Pancreas (tissue), 10 donors: ENCODE measurements at regions of chr22 and their contacts with region 1.

Region 1: DNA sequence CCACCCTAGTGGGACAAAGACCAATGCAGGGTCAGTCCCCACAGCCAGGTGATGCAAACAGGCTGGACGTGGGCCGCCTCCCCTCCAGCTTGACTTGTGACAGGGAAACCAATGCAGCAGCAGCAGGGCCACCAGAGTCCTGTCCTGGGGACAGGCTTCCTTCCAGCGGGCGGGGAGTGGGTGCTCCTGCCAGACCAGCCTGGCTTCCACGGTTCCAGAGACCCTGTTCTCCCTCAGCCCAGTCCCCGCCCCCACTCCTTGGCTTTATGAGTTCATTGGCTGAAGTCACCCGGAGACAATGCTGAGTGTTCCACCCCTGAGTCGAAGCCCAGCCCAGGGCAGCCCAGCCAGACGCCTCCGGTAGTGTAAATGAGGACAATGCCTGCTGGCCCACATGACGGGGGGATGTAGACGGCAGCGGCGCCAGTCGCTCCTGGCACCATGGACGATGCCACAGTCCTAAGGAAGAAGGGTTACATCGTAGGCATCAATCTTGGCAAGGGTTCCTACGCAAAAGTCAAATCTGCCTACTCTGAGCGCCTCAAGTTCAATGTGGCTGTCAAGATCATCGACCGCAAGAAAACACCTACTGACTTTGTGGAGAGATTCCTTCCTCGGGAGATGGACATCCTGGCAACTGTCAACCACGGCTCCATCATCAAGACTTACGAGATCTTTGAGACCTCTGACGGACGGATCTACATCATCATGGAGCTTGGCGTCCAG is at the start of gene TSSK2:
- DNase-seq: peak in 2 of 6 donors; percentile 28 to 43
- ATAC-seq: no peak
- H3K4me3 ChIP-seq: no peak within 1 kb of the TSS
- H3K27ac ChIP-seq: no peak within 1 kb of the TSS
- H3K4me1 ChIP-seq: no peaks in the 10 kb centered on the region
- H3K27me3 ChIP-seq: no peaks in the 10 kb centered on the region
- CTCF ChIP-seq: no peak
- total RNA-seq, gene TSSK2: 0.08 to 0.09 TPM in 2 of 6 donors, not detected in the others

Region 2: GRCh38 chr22:19058713-19059451 is 72.2 kb before region 1 on chr22:
- intact Hi-C with region 1: loop called in 1 of 3 experiments (anchors 10 kb)
- DNase-seq: peak in 4 of 6 donors; percentile 30 to 77 (median 52)
- ATAC-seq: peak in 3 of 4 donors; percentile 55 to 70 (median 64)
- H3K4me3 ChIP-seq: no peak overlapping the region
- H3K27ac ChIP-seq: no peak overlapping the region
- H3K4me1 ChIP-seq: peaks cover 0 to 8% (median 0%) of the 10 kb centered on the region in 3 donors
- H3K27me3 ChIP-seq: no peaks in the 10 kb centered on the region
- CTCF ChIP-seq: no peak

Region 3: GRCh38 chr22:19304547-19304946 is 173.4 kb after region 1 on chr22:
- intact Hi-C with region 1: no loop called
- DNase-seq: no peak
- ATAC-seq: no peak
- H3K4me3 ChIP-seq: no peak overlapping the region
- H3K27ac ChIP-seq: no peak overlapping the region
- H3K4me1 ChIP-seq: no peaks in the 10 kb centered on the region
- H3K27me3 ChIP-seq: no peaks in the 10 kb centered on the region
- CTCF ChIP-seq: no peak

Region 4: GRCh38 chr22:19554834-19555404 is 423.8 kb after region 1 on chr22:
- intact Hi-C with region 1: no loop called
- DNase-seq: peak in 1 of 6 donors; percentile 25
- ATAC-seq: peak in 2 of 4 donors; percentile 22 to 52
- H3K4me3 ChIP-seq: no peak overlapping the region
- H3K27ac ChIP-seq: no peak overlapping the region
- H3K4me1 ChIP-seq: no peaks in the 10 kb centered on the region
- H3K27me3 ChIP-seq: no peaks in the 10 kb centered on the region
- CTCF ChIP-seq: no peak